Endothelial cell of umbilical vein (primary cell): ENCODE measurements at regions of chr4 and their contacts with region 1.

Region 1: GRCh38 chr4:169099771-169100180 is 89.7 kb upstream of the CBR4 start:
- DNase-seq: peak; percentile 42
- H3K4me3 ChIP-seq: no peak overlapping the region
- H3K27ac ChIP-seq: peak overlapping the region; percentile 30
- H3K4me1 ChIP-seq: peaks cover 36% of the 10 kb centered on the region
- H3K27me3 ChIP-seq: no peaks in the 10 kb centered on the region
- CTCF ChIP-seq: no peak
- POLR2A ChIP-seq: no peak

Region 2: DNA sequence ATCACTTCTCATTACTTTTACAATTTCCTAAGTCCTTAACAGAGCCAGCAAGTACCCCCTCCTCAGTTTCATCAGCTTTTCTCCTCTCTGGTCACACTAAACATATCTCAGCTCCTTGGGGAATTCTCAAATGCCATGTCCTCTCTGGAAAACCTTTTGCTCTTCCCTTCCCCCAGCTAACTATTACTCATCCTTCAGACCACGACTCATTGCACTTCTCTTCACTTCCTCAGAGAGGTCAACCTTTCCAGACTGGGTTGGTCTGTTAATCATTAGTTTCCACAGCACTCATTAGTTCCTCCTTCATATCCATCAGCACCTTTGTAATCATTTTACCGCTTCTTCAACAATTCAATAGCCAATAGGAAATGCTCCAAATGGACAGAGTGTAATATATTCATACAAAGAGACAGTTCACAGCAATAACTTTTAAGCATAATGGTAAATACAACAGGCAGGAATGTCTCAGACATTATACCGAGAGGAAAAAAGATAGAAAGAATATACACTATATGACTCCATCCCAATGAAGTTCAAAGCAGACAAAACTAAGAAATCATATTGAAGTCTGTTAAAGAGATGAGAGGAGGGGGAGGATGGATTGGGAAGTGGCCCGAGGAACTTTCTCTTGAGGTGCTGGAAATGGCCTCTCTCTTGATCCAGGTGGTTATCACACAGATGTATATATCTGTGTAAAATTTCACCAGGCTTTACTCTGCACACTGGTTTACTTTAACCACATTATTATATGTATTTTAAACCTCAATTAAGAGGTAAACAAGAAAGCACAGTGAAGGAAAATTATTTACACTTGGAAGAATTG is 659.1 kb before region 1 on chr4:
- CTCF ChIA-PET with region 1: no interaction called
- POLR2A ChIA-PET with region 1: no interaction called
- dilution Hi-C with region 1: no loop called
- intact Hi-C with region 1: no loop called
- DNase-seq: peak; percentile 85
- H3K4me3 ChIP-seq: no peak overlapping the region
- H3K27ac ChIP-seq: peak overlapping the region; percentile 61
- H3K4me1 ChIP-seq: peaks cover 19% of the 10 kb centered on the region
- H3K27me3 ChIP-seq: no peaks in the 10 kb centered on the region
- CTCF ChIP-seq: no peak
- POLR2A ChIP-seq: no peak

Region 3: GRCh38 chr4:169024762-169025161 is 75.0 kb before region 1 on chr4:
- CTCF ChIA-PET with region 1: interaction called, 6 read pairs
- POLR2A ChIA-PET with region 1: no interaction called
- dilution Hi-C with region 1: no loop called
- intact Hi-C with region 1: loop called (anchors 1 kb)
- DNase-seq: peak; percentile 68
- H3K4me3 ChIP-seq: no peak overlapping the region
- H3K27ac ChIP-seq: no peak overlapping the region
- H3K4me1 ChIP-seq: no peaks in the 10 kb centered on the region
- H3K27me3 ChIP-seq: no peaks in the 10 kb centered on the region
- CTCF ChIP-seq: peak; percentile 51 to 57
- POLR2A ChIP-seq: no peak

Region 4: DNA sequence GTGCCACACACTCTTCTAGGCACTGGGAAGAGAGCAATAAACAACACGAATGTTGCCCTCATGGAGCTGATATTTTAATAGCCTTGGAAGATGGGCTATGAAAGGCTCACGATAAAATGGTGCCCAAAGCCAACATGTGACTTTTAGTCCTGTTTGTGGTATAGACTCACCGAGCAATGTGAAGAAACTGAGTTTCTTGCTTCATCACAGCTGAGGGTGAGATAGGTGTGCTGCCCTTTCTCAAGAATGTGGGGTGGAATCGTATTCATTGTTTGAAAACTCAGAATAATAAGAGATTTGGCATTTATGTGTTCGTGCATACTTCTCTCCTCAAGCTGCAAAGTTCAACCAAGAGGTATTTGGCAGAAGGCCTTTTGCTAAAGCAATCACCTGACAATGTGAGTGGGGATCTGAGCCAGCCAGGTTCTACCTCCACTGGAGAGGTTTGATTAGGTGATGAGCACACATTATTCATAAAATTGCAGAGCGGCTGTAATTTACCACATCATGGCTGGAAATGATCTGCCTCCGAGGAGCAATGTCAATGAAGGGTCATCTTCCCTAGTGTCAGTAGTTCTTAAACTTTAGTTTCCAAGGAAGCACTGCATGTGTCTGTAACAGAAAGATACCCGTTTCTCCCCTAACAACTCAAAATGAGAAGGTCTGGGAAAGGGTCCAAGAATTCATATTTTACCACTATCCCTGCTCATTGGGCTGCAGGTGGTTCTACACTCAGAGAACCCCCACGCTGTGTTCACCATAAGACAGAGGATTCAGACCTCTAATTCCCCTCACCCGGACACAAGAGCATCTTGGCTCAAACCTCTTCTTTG is 47.8 kb before region 1 on chr4:
- CTCF ChIA-PET with region 1: no interaction called
- POLR2A ChIA-PET with region 1: interaction called, 3 read pairs
- dilution Hi-C with region 1: no loop called
- intact Hi-C with region 1: loop called (anchors 2 kb)
- DNase-seq: no peak
- H3K4me3 ChIP-seq: no peak overlapping the region
- H3K27ac ChIP-seq: no peak overlapping the region
- H3K4me1 ChIP-seq: peaks cover 17% of the 10 kb centered on the region
- H3K27me3 ChIP-seq: no peaks in the 10 kb centered on the region
- CTCF ChIP-seq: no peak
- POLR2A ChIP-seq: no peak

Region 5: DNA sequence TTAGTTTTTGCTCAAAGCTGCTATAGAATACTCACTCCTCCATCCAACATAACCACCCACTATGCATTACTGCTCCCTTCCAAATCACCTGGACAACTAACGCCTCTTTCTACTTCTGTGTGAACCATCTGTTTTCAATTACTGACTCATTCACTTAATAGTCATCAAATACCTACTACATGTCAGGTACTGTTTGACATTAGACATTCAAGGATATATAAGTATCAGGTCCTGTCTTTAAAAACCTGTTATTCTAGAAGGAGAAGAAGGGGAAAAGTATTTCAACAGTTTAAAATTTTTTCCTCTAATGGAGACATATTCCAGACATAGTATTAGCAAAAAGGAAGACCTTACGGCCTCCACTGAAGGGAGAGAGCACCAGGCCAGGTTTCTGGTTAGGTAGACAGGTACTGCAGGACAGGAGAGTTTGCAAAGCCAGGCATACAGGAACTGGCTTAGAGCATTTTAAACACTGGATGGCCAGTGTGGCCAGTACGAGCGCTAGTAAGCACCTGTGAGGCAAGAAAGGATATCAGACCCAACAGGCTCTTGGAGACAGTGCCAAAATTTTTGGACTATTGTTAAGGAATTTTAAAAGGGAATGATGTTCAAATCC is 132.0 kb after region 1 on chr4:
- CTCF ChIA-PET with region 1: no interaction called
- POLR2A ChIA-PET with region 1: no interaction called
- dilution Hi-C with region 1: no loop called
- intact Hi-C with region 1: no loop called
- DNase-seq: no peak
- H3K4me3 ChIP-seq: no peak overlapping the region
- H3K27ac ChIP-seq: no peak overlapping the region
- H3K4me1 ChIP-seq: peaks cover 9% of the 10 kb centered on the region
- H3K27me3 ChIP-seq: no peaks in the 10 kb centered on the region
- CTCF ChIP-seq: no peak
- POLR2A ChIP-seq: no peak